Activated T-helper 1 cell treated with anti-CD3 and anti-CD28 coated beads, Interleukin-12 subunit alpha, Interleukin-12 subunit beta, Interleukin-2, Interleukin-4 antibody, amounts not matched to agents 30 ng/mL and 10 ng/mL and 1 ng/mL, durations not matched to agents 14 hours and 24 hours and 36 hours (primary cell): ENCODE measurements at regions of chr2 and their contacts with region 1.

Region 1: DNA sequence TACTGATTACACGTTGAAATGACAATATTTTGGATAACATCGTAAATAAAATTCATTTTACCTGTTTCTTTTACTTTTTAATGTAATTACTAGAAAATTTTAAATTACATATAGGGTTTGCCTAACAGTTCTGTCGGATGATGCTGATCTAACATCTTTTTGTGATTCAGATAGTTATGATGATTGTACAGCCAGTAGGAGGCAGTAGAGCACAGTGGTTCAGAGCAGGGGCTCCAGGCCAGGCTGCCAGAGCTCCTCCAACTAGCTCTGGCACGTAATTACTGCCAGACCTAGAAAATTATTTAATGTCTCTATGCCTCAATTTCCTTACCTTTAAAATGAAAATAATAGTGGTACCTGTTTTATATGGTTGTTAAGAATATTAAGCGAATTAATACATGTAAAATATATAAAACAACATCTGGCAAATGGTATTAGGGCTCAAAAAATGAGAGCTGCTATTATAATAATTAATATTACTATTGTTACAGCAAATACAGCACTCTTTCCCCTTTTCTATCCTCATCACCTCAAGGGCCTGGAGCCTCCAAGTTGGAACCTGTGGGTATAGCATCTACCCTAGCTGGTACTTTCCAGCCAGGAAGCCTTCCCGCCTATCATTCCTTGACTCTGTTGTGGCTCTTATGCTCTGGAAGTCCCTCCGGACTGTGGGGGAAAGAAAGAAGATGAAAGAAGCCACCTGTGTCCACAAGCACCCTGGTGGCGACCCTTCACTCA is 47.7 kb upstream of the PLA2R1 start:
- DNase-seq: peak; percentile 21
- H3K4me3 Mint-ChIP-seq: no peak overlapping the region
- H3K27ac Mint-ChIP-seq: no peak overlapping the region
- H3K4me1 Mint-ChIP-seq: no peaks in the 10 kb centered on the region
- H3K27me3 Mint-ChIP-seq: peaks cover 4% of the 10 kb centered on the region

Region 2: DNA sequence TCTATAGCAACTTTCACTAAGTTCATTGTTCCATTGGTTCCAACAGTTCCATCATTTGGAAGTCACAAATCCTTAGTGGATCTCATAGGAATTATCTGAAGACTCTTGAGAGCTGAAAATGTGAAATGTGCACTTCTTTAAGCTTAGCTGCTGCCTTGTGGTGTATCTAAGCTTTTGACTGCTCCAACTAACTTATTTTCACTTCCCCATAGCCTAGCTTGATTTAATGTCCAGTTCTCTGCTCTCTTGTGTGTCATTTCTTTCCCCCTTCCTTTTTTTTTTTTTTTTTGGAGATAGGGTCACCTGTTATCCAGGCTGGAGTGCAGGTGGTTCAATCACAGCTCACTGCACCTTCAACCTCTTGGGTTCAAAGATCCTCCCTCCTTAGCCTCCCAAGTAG is 277.2 kb before region 1 on chr2:
- intact Hi-C with region 1: no loop called
- DNase-seq: no peak
- H3K4me3 Mint-ChIP-seq: no peak overlapping the region
- H3K27ac Mint-ChIP-seq: no peak overlapping the region
- H3K4me1 Mint-ChIP-seq: no peaks in the 10 kb centered on the region
- H3K27me3 Mint-ChIP-seq: no peaks in the 10 kb centered on the region

Region 3: DNA sequence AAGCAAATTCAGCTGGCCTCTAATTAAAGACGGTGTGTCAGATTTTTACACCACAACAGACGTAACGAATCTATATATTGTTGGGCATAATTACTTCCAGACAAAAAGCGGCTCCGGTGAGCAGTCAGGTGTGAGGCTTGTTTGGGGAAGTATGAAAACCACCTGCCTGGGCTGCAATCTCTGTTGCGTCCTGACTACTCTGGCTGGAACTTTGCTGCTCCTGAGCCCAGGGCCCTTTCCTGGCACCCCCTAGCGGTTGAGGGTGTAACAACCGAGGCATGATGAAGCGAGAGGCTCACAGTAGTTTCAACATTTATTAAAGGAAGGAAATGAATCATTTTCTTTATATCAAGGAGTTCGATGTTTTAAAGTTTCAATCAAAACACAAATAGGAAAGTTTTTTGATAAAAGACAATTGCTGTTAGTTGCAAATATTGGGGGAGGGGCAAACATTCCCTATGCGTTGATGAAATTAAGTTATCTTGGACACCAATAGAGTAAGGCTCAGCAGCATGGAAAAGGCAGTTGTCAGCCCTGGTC is 100.6 kb after region 1 on chr2:
- intact Hi-C with region 1: loop called (anchors 1 kb)
- DNase-seq: peak; percentile 48
- H3K4me3 Mint-ChIP-seq: no peak overlapping the region
- H3K27ac Mint-ChIP-seq: no peak overlapping the region
- H3K4me1 Mint-ChIP-seq: peaks cover 24% of the 10 kb centered on the region
- H3K27me3 Mint-ChIP-seq: peaks cover 17% of the 10 kb centered on the region

Region 4: GRCh38 chr2:160334028-160334741 is 224.1 kb after region 1 on chr2:
- intact Hi-C with region 1: no loop called
- DNase-seq: no peak
- H3K4me3 Mint-ChIP-seq: no peak overlapping the region
- H3K27ac Mint-ChIP-seq: peak overlapping the region; percentile 69
- H3K4me1 Mint-ChIP-seq: peaks cover 78% of the 10 kb centered on the region
- H3K27me3 Mint-ChIP-seq: no peaks in the 10 kb centered on the region

Region 5: DNA sequence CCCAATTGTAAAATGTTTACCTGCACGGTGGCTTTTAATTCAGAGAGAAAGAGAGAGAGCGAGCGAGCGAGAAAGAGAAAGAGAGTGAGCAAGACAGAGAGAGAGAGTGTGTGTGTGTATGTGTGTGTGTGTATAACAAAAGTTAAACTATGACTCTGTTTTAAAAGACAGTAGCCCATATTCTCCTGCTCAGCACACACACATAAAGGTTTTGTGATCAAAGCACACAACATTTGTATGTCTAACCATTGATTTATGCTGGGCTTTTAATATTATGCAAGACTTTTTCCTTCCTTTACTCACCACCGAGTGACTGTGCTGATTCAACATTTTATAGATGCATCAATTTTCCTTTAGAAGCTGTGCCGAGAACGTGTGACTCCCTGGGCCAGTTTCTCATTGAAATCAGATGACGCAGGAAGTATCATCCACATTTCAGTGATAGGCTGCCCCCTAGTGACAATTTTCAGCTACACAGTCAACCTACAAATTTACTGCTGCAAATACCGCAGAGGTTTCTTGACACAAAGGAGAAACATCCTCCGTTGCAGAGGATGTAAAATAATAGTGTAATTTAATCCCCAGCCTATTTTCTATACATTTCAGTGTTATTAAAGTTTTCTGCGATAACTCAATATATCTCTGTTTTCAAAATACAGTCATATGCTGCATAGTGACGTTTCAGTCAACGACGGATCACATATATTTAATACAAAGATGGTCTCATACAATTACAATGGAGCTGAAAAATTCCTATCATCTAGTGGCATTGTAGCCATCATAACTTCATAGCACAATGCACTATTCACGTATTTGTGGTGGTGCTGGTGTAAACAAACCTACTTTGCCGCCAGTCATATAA is 884.3 kb after region 1 on chr2:
- intact Hi-C with region 1: loop called (anchors 1 kb)
- DNase-seq: peak; percentile 57
- H3K4me3 Mint-ChIP-seq: no peak overlapping the region
- H3K27ac Mint-ChIP-seq: no peak overlapping the region
- H3K4me1 Mint-ChIP-seq: peaks cover 11% of the 10 kb centered on the region
- H3K27me3 Mint-ChIP-seq: peaks cover 2% of the 10 kb centered on the region

Region 6: GRCh38 chr2:161063157-161063954 is 953.3 kb after region 1 on chr2:
- intact Hi-C with region 1: loop called (anchors 1 kb)
- DNase-seq: peak; percentile 59
- H3K4me3 Mint-ChIP-seq: no peak overlapping the region
- H3K27ac Mint-ChIP-seq: no peak overlapping the region
- H3K4me1 Mint-ChIP-seq: peaks cover 30% of the 10 kb centered on the region
- H3K27me3 Mint-ChIP-seq: peaks cover 2% of the 10 kb centered on the region